ENCODE measurements at regions of chr11 and their contacts with region 1.

Region 1: DNA sequence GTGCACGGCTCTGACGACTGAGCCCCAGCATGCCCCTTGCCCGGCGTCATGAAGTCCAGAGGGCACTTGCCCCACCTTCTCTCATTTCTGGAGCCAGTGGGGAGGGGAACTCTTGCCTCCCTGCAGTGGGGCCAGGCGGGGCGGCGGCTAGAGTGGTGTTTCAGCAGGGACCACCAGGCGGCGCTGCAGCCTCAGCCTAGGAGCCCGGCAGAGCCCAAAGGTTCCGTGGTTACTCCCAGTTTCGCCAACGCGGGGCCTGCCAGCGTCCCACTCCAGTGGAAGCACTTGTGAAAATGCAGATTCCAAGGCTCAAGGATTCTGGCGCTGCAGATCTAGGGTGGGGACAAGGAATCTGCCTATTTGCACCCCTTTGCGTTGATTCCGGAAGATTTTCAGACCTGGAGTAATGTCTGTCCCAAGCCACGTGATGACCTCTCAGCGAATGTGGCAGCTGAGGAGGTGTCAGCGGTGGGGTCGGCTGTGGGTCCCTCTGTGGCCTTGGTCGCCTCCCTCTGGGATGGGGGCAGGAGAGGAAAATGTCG is 55.7 kb downstream of the CD82 start:
- DNase-seq: peak; percentile 7 to 86
- H3K4me3 ChIP-seq: no peak overlapping the region
- H3K27ac ChIP-seq: no peak overlapping the region
- H3K4me1 ChIP-seq: peaks cover 0 to 6% of the 10 kb centered on the region in 2 donors
- H3K27me3 ChIP-seq: no peaks in the 10 kb centered on the region
- CTCF ChIP-seq: peak; percentile 92 to 97 (median 95)

Region 2: DNA sequence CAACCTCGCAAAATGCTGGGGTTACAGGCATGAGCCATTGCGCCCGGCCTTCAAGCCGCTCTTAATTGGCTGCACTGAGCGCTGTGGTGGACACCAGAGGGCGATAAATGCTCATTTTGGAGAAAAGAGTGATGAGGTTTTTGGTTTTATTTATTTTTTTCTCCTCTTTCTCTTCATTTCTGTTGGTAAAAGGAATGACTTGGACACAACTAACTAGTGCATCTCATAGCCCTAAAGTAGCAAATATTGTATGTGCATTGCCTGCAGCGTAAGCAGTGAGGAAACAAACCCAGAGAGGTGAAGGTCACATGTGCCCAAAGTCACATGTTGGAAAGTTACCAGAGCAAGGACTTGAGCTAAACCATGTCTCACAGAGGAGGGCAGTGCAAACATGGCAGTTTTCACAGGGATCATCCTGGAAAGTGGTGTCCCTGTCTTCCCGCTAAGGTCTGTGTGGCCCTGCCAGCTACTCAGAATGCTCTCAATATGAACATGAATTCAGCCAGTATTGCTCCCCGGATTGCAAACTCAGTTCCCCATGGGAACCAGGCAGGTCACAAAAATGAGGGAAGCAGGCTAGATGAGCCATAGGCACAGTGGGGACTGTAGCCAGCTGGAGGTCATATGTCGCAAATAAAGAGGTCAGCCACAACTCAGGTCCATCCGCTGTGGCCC is 64.3 kb before region 1 on chr11:
- intact Hi-C with region 1: loop called (anchors 1 kb)
- DNase-seq: peak in 1 of 2 donors; percentile 80
- H3K4me3 ChIP-seq: no peak overlapping the region
- H3K27ac ChIP-seq: no peak overlapping the region
- H3K4me1 ChIP-seq: peaks cover 0 to 2% of the 10 kb centered on the region in 2 donors
- H3K27me3 ChIP-seq: no peaks in the 10 kb centered on the region
- CTCF ChIP-seq: peak; percentile 76 to 87 (median 83)

Region 3: DNA sequence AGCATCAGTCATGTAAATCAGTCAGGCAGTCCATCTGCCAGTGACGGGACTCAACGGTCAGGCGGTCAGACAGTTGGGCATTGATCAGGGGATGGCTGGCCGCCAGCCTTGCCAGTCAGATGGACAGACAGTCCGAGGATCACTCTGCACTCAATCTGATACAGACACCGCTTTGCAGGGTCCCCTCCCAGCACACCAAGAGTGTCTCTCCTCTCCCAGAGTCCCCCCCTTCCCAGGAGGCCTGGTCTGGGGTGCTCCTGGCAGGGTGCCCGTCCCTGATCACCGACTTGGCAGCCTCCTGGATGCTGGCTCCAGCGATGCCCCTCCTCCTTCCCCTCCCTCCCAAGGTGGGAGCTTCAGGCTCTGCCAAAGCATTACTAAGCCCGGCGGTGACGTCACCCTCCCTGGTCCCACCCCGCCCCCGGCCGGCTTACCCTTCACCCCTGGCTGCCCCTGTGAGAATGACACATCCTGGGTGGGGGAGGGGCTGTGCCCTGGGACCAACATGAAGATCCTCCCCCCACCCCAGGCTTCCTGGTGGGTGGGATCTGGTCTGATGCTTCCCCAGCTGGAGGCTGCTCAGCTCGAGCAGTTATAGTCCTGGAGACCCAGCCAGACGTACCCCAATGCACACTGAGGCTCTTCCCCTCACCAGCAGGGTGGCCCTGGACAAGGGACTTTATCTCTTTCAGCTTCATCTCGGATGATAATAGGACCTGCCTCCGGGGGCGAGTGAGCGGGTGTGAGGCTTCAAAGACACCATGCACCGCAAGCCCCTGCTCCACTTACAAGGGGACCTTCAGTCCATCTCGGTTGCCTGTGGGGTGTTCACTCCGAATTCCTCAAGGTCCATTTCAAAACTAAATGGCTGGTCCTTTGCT is 13.4 kb after region 1 on chr11:
- intact Hi-C with region 1: no loop called
- DNase-seq: peak in 1 of 2 donors; percentile 76
- H3K4me3 ChIP-seq: no peak overlapping the region
- H3K27ac ChIP-seq: no peak overlapping the region
- H3K4me1 ChIP-seq: peaks cover 0 to 5% of the 10 kb centered on the region in 2 donors
- H3K27me3 ChIP-seq: no peaks in the 10 kb centered on the region
- CTCF ChIP-seq: no peak

Region 4: GRCh38 chr11:44645827-44646226 is 24.6 kb after region 1 on chr11:
- intact Hi-C with region 1: no loop called
- DNase-seq: no peak
- H3K4me3 ChIP-seq: no peak overlapping the region
- H3K27ac ChIP-seq: no peak overlapping the region
- H3K4me1 ChIP-seq: no peaks in the 10 kb centered on the region
- H3K27me3 ChIP-seq: no peaks in the 10 kb centered on the region
- CTCF ChIP-seq: no peak

Region 5: GRCh38 chr11:44727373-44728287 is 106.4 kb after region 1 on chr11:
- intact Hi-C with region 1: loop called (anchors 5 kb)
- DNase-seq: peak; percentile 14 to 82
- H3K4me3 ChIP-seq: peak overlapping the region; percentile 55 to 71
- H3K27ac ChIP-seq: no peak overlapping the region
- H3K4me1 ChIP-seq: peaks cover 3 to 14% of the 10 kb centered on the region in 2 donors
- H3K27me3 ChIP-seq: no peaks in the 10 kb centered on the region
- CTCF ChIP-seq: peak; percentile 85 to 98 (median 93)

Region 6: DNA sequence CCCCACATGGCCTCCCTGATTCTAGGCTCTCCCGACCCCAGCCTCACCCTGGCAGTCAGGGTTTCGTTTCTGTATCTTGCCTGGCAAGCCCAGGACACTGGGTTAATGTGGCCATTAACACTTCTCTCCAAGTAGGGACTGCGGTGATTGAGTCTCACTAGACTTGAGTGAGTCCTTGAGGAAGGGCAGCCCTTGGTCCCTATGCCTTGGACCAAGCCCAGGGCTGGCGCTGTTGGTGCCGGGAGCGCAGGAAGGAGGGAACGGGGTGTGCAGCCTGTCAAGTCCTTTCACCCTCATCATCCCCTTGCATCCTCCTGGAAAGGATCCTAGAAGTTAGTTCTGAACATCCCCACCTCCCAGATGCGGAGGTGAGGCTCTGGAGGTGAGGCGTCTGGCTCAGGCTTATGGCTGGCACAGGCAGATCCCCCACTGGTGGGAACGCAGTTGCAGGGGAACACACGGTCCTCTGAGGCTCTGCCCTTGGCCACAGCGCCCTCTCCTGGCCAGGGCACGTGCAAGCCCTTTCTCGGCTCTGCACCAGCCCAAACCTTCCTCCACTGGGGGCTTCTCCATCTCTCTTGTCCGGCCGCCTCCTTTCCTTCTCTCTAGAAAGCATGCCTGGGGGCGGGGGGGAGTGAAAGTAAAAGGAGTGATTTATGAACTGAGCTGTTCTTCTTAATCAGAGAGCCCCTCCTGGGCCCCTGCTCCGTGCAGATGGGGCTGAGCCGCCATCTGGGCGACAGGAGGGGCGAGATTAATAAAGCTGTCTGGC is 272.8 kb after region 1 on chr11:
- intact Hi-C with region 1: loop called (anchors 1 kb)
- DNase-seq: no peak
- H3K4me3 ChIP-seq: no peak overlapping the region
- H3K27ac ChIP-seq: peak overlapping the region; percentile 13 to 39
- H3K4me1 ChIP-seq: no peaks in the 10 kb centered on the region
- H3K27me3 ChIP-seq: no peaks in the 10 kb centered on the region
- CTCF ChIP-seq: peak; percentile 73 to 75 (median 73)

Region 7: GRCh38 chr11:44911029-44911814 is 290.0 kb after region 1 on chr11:
- intact Hi-C with region 1: loop called (anchors 1 kb)
- DNase-seq: peak; percentile 51 to 94
- H3K4me3 ChIP-seq: no peak overlapping the region
- H3K27ac ChIP-seq: peak overlapping the region in 1 of 2 donors; percentile 26
- H3K4me1 ChIP-seq: peaks cover 0 to 11% of the 10 kb centered on the region in 2 donors
- H3K27me3 ChIP-seq: no peaks in the 10 kb centered on the region
- CTCF ChIP-seq: peak; percentile 77 to 85 (median 78)

Region 8: DNA sequence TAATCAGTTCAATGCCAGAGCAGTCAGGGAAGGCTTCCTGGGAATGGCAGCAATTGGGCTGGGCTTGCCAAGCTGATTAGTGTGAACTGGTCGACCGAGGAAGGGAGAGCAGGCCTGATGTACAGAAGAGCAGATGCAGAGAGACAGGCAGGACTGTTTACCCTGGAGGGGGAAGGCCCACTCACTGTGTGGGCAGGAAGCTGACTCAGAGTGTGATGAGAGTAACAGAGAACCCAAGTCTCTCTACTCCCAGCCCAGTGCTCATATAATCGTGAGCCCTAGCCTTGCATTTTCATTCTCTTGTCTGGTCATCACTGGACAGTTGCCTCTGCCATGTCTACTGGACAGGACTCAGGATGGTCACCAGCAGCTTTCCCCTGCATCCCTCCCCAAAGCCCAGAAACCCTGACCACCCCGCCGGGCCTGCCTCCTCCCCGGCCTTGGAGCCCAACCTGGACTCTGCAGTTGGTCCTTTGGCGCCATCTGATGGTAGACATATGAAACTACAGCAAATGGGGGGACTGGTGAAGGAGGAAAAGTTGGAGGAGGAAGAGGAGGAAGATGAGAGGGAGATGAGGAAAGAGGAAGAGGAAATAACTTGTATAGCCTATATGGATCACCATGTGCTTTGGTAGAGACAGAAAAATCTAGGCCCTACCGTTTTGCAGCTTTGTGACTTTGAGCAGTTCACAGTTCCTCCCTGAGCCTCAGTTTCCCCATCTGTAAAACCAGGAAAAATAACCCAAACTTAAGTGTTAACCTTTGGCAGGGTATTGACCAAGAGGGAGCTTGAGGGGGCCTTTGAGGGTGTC is 481.8 kb after region 1 on chr11:
- intact Hi-C with region 1: loop called (anchors 5 kb)
- DNase-seq: peak in 1 of 2 donors; percentile 75
- H3K4me3 ChIP-seq: no peak overlapping the region
- H3K27ac ChIP-seq: no peak overlapping the region
- H3K4me1 ChIP-seq: peaks cover 3% of the 10 kb centered on the region in 2 donors
- H3K27me3 ChIP-seq: peaks cover 5% of the 10 kb centered on the region
- CTCF ChIP-seq: peak; percentile 96 to 99 (median 96)